Caco-2 (cell line): ENCODE measurements at regions of chr14 and their contacts with region 1.

Region 1: GRCh38 chr14:24710403-24711112 is 76.6 kb upstream of the GZMB start:
- DNase-seq: peak; percentile 61 to 71
- H3K4me3 ChIP-seq: no peak overlapping the region
- H3K4me3 Mint-ChIP-seq: no peak overlapping the region
- H3K27ac Mint-ChIP-seq: no peak overlapping the region
- H3K4me1 ChIP-seq: no peaks in the 10 kb centered on the region
- H3K4me1 Mint-ChIP-seq: no peaks in the 10 kb centered on the region
- H3K27me3 ChIP-seq: no peaks in the 10 kb centered on the region
- H3K27me3 Mint-ChIP-seq: peaks cover 9% of the 10 kb centered on the region
- CTCF ChIP-seq: peak; percentile 80 to 91

Region 2: GRCh38 chr14:24595073-24595808 is 115.3 kb before region 1 on chr14:
- CTCF ChIA-PET with region 1: no interaction called
- POLR2A ChIA-PET with region 1: no interaction called
- intact Hi-C with region 1: no loop called
- DNase-seq: no peak
- H3K4me3 ChIP-seq: no peak overlapping the region
- H3K4me3 Mint-ChIP-seq: no peak overlapping the region
- H3K27ac Mint-ChIP-seq: no peak overlapping the region
- H3K4me1 ChIP-seq: no peaks in the 10 kb centered on the region
- H3K4me1 Mint-ChIP-seq: no peaks in the 10 kb centered on the region
- H3K27me3 ChIP-seq: no peaks in the 10 kb centered on the region
- H3K27me3 Mint-ChIP-seq: peaks cover 12% of the 10 kb centered on the region
- CTCF ChIP-seq: no peak

Region 3: GRCh38 chr14:24734878-24735500 is 24.4 kb after region 1 on chr14:
- CTCF ChIA-PET with region 1: no interaction called
- POLR2A ChIA-PET with region 1: no interaction called
- intact Hi-C with region 1: no loop called
- DNase-seq: peak; percentile 42 to 66
- H3K4me3 ChIP-seq: no peak overlapping the region
- H3K4me3 Mint-ChIP-seq: no peak overlapping the region
- H3K27ac Mint-ChIP-seq: no peak overlapping the region
- H3K4me1 ChIP-seq: no peaks in the 10 kb centered on the region
- H3K4me1 Mint-ChIP-seq: no peaks in the 10 kb centered on the region
- H3K27me3 ChIP-seq: no peaks in the 10 kb centered on the region
- H3K27me3 Mint-ChIP-seq: no peaks in the 10 kb centered on the region
- CTCF ChIP-seq: peak; percentile 69 to 70

Region 4: GRCh38 chr14:25042362-25043299 is 332.1 kb after region 1 on chr14:
- CTCF ChIA-PET with region 1: no interaction called
- POLR2A ChIA-PET with region 1: no interaction called
- intact Hi-C with region 1: loop called (anchors 2 kb)
- DNase-seq: peak; percentile 55 to 56
- H3K4me3 ChIP-seq: no peak overlapping the region
- H3K4me3 Mint-ChIP-seq: no peak overlapping the region
- H3K27ac Mint-ChIP-seq: peak overlapping the region; percentile 44
- H3K4me1 ChIP-seq: no peaks in the 10 kb centered on the region; the same call in 1 of the 2 replicates
- H3K4me1 Mint-ChIP-seq: peaks cover 22% of the 10 kb centered on the region
- H3K27me3 ChIP-seq: no peaks in the 10 kb centered on the region
- H3K27me3 Mint-ChIP-seq: no peaks in the 10 kb centered on the region
- CTCF ChIP-seq: peak; percentile 54 to 79

Region 5: DNA sequence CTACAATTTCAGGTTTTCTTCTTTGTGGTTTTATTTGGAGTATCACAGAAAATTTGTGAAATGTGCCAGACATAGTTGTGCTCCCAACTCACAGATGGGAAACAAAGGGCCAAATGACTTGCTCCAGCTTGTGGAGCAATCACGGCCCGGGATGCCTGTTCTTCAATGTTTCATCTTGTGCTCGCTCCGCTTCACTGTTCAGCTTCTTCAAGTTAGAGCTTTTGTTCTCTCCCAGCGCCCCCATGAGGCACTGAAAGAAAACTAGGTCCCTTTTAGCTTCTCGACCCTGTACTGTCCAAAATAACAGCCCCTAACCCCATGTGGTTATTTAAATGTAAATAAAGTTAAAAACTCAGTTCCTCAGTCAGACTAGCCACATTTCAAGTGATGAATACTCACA is 527.3 kb after region 1 on chr14:
- CTCF ChIA-PET with region 1: interaction called, 11 read pairs
- POLR2A ChIA-PET with region 1: no interaction called
- intact Hi-C with region 1: loop called (anchors 1 kb)
- DNase-seq: peak; percentile 29 to 36
- H3K4me3 ChIP-seq: no peak overlapping the region
- H3K4me3 Mint-ChIP-seq: no peak overlapping the region
- H3K27ac Mint-ChIP-seq: no peak overlapping the region
- H3K4me1 ChIP-seq: no peaks in the 10 kb centered on the region
- H3K4me1 Mint-ChIP-seq: no peaks in the 10 kb centered on the region
- H3K27me3 ChIP-seq: no peaks in the 10 kb centered on the region
- H3K27me3 Mint-ChIP-seq: peaks cover 14% of the 10 kb centered on the region
- CTCF ChIP-seq: peak in 1 of 2 experiments; percentile 40

Region 6: GRCh38 chr14:25400607-25401206 is 690.1 kb after region 1 on chr14:
- CTCF ChIA-PET with region 1: no interaction called
- POLR2A ChIA-PET with region 1: no interaction called
- intact Hi-C with region 1: loop called (anchors 1 kb)
- DNase-seq: peak; percentile 46 to 52
- H3K4me3 ChIP-seq: no peak overlapping the region
- H3K4me3 Mint-ChIP-seq: no peak overlapping the region
- H3K27ac Mint-ChIP-seq: no peak overlapping the region
- H3K4me1 ChIP-seq: no peaks in the 10 kb centered on the region
- H3K4me1 Mint-ChIP-seq: no peaks in the 10 kb centered on the region
- H3K27me3 ChIP-seq: no peaks in the 10 kb centered on the region
- H3K27me3 Mint-ChIP-seq: peaks cover 6% of the 10 kb centered on the region
- CTCF ChIP-seq: peak; percentile 66 to 70

Region 7: DNA sequence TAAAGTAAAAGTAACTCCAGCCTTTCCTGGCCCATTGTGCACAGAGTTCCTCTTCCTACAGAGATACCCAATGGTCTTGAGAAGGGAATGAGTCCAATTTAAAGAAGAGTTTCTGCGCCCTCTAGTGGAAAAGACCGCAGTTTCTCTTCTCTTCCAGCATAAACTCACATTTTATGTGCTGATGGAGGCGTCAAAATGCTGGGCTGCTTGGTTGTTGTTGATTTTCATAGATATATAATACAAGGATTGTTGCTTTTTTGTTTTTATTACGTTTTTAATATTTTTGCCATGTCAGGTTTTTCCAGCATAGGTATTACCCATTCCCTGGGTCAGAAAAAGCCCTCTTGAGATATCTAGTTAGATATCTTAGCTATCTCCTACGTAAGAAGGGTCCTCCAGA is 696.3 kb after region 1 on chr14:
- CTCF ChIA-PET with region 1: no interaction called
- POLR2A ChIA-PET with region 1: no interaction called
- intact Hi-C with region 1: loop called (anchors 1 kb)
- DNase-seq: peak; percentile 34 to 44
- H3K4me3 ChIP-seq: no peak overlapping the region
- H3K4me3 Mint-ChIP-seq: no peak overlapping the region
- H3K27ac Mint-ChIP-seq: no peak overlapping the region
- H3K4me1 ChIP-seq: no peaks in the 10 kb centered on the region
- H3K4me1 Mint-ChIP-seq: no peaks in the 10 kb centered on the region
- H3K27me3 ChIP-seq: no peaks in the 10 kb centered on the region
- H3K27me3 Mint-ChIP-seq: peaks cover 10% of the 10 kb centered on the region
- CTCF ChIP-seq: peak; percentile 55